ENCODE measurements at regions of chr1 and their contacts with region 1.

Region 1: GRCh38 chr1:16958503-16958902 is 21.9 kb downstream of the MFAP2 start:
- DNase-seq: no peak
- ATAC-seq: no peak
- H3K4me3 ChIP-seq: no peak overlapping the region
- H3K27ac ChIP-seq: no peak overlapping the region
- H3K4me1 ChIP-seq: peaks cover 0 to 5% (median 4%) of the 10 kb centered on the region in 3 donors
- H3K27me3 ChIP-seq: no peaks in the 10 kb centered on the region
- CTCF ChIP-seq: no peak

Region 2: DNA sequence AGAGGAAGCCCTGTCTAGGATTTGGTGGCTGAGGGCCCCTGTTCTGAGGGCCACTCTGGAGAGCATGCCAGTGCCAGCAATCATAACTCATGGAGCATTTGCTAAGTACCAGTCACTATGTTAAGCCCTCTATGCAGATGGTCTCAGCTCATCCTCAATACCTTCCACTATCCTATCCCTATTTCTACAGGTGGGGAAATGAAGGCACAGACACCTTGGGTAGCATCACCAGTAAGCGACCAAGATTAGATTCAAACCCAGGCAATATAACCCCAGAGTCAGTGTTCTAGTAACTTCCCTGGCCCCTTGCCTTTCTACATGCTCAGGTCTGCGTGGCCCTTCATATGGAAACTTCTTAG is 337.2 kb before region 1 on chr1:
- intact Hi-C with region 1: loop called in 1 of 3 experiments (anchors 5 kb)
- DNase-seq: no peak
- ATAC-seq: no peak
- H3K4me3 ChIP-seq: no peak overlapping the region
- H3K27ac ChIP-seq: no peak overlapping the region
- H3K4me1 ChIP-seq: peaks cover 6 to 11% (median 8%) of the 10 kb centered on the region in 3 donors
- H3K27me3 ChIP-seq: no peaks in the 10 kb centered on the region
- CTCF ChIP-seq: no peak

Region 3: DNA sequence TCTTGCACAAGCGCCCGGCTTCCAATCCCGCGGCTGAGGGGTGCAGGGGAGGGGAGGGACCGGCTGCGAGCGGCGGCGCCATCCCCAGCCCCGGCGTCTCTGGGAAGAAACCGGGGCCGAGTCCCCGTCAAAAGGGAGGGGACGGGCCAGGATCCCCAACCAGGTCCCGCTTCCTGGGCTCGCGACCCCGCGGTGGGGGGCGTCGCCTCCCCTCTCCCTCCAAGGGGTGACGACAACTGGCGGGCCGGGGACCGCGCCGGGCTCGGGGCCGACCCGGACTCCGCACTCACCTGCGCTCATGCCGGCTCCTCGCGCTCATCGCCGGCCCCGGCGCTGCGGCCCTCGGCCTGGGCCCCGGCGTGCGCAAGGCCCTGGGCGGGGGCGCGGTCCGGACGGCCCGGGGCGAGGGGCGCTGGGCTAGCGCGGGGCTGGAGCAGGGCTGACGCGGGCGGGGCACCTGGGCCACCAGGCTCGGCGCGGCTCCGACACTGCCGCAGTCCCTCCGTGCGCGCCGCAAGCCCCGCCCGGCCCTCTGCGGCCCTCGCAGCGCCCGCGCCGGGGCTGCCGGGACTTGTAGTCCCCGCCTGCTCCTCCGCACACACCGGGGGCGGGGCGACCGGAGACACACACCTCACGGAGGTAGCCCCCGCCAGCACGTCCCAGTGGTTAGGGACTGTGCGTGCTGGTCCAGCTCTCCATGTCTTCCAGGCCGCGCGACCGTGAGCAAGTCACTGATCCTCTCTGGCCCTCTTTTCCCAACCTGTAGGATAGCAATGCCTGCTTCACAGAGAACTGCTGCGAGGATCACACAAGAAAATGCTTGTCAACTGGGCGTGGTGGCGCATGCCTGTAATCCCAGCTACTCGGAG is 53.2 kb after region 1 on chr1 and contains the start of gene ATP13A2:
- intact Hi-C with region 1: no loop called
- DNase-seq: peak; percentile 80 to 93 (median 84)
- ATAC-seq: peak; percentile 89 to 94 (median 94)
- H3K4me3 ChIP-seq: peak within 1 kb of the TSS; percentile 76 to 97 (median 92)
- H3K27ac ChIP-seq: peak within 1 kb of the TSS in 3 of 4 donors; percentile 16 to 58 (median 51)
- H3K4me1 ChIP-seq: peaks cover 6 to 35% (median 18%) of the 10 kb centered on the region in 3 donors
- H3K27me3 ChIP-seq: no peaks in the 10 kb centered on the region
- CTCF ChIP-seq: no peak
- total RNA-seq, gene ATP13A2: 44.0 to 64.1 (median 52.6) TPM

Region 4: GRCh38 chr1:17045634-17046333 is 87.3 kb after region 1 on chr1:
- intact Hi-C with region 1: loop called (anchors 5 kb)
- DNase-seq: no peak
- ATAC-seq: peak; percentile 77 to 90 (median 87)
- H3K4me3 ChIP-seq: peak overlapping the region in 1 of 4 donors; percentile 23
- H3K27ac ChIP-seq: peak overlapping the region in 2 of 4 donors; percentile 4 to 15
- H3K4me1 ChIP-seq: peaks cover 0 to 8% (median 0%) of the 10 kb centered on the region in 3 donors
- H3K27me3 ChIP-seq: no peaks in the 10 kb centered on the region
- CTCF ChIP-seq: peak; percentile 43 to 74 (median 70)

Measured in pancreas (tissue), 10 donors.